MCF 10A (cell line): ENCODE measurements at regions of chr5 and their contacts with region 1.

Region 1: DNA sequence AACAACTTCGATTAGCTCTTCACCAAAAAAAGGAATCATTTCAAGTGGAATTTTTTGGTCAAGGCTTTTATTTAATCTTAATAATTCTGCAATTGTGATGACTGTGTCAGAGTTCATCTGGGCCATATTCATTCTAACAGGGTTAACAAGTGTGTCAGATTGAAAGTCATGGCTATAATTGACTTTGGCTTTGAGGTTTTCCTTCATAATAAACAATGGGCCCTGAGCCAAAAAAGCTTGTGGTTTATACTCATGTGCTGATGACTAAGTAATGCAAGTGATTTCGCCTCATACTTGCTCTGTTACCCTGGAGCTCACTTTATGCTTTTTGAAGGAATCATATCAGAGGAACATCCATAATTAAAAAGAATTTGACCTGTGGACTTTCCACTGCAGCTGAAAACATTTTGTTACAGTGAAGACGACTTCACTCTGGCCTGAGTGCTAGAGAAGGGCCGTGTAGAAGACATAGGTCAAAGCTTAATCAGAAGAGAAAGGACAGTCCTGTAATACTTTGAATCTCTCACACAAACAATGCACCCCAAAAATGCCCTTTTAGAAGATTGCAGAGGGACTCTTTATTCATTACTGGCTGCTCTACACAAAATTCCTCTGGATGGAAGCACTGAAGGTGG is 101.7 kb downstream of the GDNF start:
- DNase-seq: peak; percentile 92
- H3K4me3 Mint-ChIP-seq: peak overlapping the region; percentile 28
- H3K27ac Mint-ChIP-seq: peak overlapping the region; percentile 85
- H3K4me1 Mint-ChIP-seq: peaks cover 29% of the 10 kb centered on the region
- H3K27me3 Mint-ChIP-seq: no peaks in the 10 kb centered on the region
- CTCF ChIP-seq: no peak

Region 2: GRCh38 chr5:37103302-37103701 is 634.9 kb before region 1 on chr5:
- CTCF ChIA-PET with region 1: no interaction called
- POLR2A ChIA-PET with region 1: no interaction called
- intact Hi-C with region 1: no loop called
- DNase-seq: no peak
- H3K4me3 Mint-ChIP-seq: no peak overlapping the region
- H3K27ac Mint-ChIP-seq: no peak overlapping the region
- H3K4me1 Mint-ChIP-seq: no peaks in the 10 kb centered on the region
- H3K27me3 Mint-ChIP-seq: no peaks in the 10 kb centered on the region
- CTCF ChIP-seq: no peak

Region 3: GRCh38 chr5:37658440-37658839 is 79.7 kb before region 1 on chr5:
- CTCF ChIA-PET with region 1: no interaction called
- POLR2A ChIA-PET with region 1: no interaction called
- intact Hi-C with region 1: no loop called
- DNase-seq: peak; percentile 9
- H3K4me3 Mint-ChIP-seq: no peak overlapping the region
- H3K27ac Mint-ChIP-seq: no peak overlapping the region
- H3K4me1 Mint-ChIP-seq: peaks cover 14% of the 10 kb centered on the region
- H3K27me3 Mint-ChIP-seq: no peaks in the 10 kb centered on the region
- CTCF ChIP-seq: no peak

Region 4: GRCh38 chr5:37668524-37669047 is 69.6 kb before region 1 on chr5:
- CTCF ChIA-PET with region 1: no interaction called
- POLR2A ChIA-PET with region 1: interaction called, 4 read pairs
- intact Hi-C with region 1: loop called (anchors 2 kb)
- DNase-seq: peak; percentile 94
- H3K4me3 Mint-ChIP-seq: no peak overlapping the region
- H3K27ac Mint-ChIP-seq: peak overlapping the region; percentile 78
- H3K4me1 Mint-ChIP-seq: peaks cover 13% of the 10 kb centered on the region
- H3K27me3 Mint-ChIP-seq: no peaks in the 10 kb centered on the region
- CTCF ChIP-seq: no peak

Region 5: GRCh38 chr5:37696190-37697021 is 41.8 kb before region 1 on chr5:
- CTCF ChIA-PET with region 1: no interaction called
- POLR2A ChIA-PET with region 1: interaction called, 11 read pairs
- intact Hi-C with region 1: no loop called
- DNase-seq: peak; percentile 74
- H3K4me3 Mint-ChIP-seq: no peak overlapping the region
- H3K27ac Mint-ChIP-seq: peak overlapping the region; percentile 65
- H3K4me1 Mint-ChIP-seq: peaks cover 18% of the 10 kb centered on the region
- H3K27me3 Mint-ChIP-seq: no peaks in the 10 kb centered on the region
- CTCF ChIP-seq: no peak

Region 6: DNA sequence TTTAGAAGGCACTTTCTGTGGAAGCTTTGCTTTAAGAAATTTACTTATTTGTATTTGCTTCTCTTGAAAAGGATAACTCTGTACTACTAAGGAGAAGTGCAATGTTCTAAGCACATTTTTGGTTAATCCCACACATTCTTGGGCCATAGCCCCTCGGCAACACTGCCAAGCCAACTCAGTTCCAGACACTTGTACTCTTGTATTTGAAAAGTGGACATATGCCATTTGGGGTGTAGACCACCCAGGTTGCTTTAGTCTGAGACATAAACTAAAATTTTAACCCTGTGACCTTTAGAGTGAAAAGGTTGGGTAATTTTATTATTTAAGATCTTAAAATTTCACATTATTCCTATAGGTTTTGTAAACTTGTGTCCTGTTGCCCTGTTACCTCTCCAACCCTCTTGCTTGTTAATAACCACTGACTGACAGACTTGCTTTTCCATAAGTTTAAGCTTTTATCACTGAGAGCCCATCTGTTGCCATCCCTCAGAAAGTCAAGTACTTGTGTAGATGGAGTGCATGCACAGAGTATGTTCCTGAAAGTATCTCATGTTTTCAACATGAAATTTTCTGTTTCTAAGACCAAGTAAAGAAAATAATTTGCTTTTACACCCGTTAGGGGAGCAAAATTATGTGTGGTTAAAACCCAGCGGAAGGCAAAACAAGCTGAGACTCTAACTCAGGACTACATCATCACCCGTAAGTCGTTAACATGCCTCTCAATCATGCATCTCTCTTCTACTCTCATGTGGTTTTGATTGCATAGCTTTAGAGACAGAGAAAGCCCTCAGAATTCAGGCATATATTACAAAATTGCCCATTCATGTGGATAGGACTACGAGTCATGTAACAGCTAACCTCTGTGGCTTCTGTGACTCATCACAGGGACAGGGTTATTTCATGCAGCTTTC is 15.7 kb before region 1 on chr5:
- CTCF ChIA-PET with region 1: interaction called, 14 read pairs
- POLR2A ChIA-PET with region 1: interaction called, 9 read pairs
- intact Hi-C with region 1: no loop called
- DNase-seq: peak; percentile 77
- H3K4me3 Mint-ChIP-seq: no peak overlapping the region
- H3K27ac Mint-ChIP-seq: no peak overlapping the region
- H3K4me1 Mint-ChIP-seq: peaks cover 19% of the 10 kb centered on the region
- H3K27me3 Mint-ChIP-seq: no peaks in the 10 kb centered on the region
- CTCF ChIP-seq: no peak

Region 7: GRCh38 chr5:37757980-37758583 is 19.9 kb after region 1 on chr5:
- CTCF ChIA-PET with region 1: no interaction called
- POLR2A ChIA-PET with region 1: no interaction called
- intact Hi-C with region 1: no loop called
- DNase-seq: peak; percentile 7
- H3K4me3 Mint-ChIP-seq: no peak overlapping the region
- H3K27ac Mint-ChIP-seq: no peak overlapping the region
- H3K4me1 Mint-ChIP-seq: no peaks in the 10 kb centered on the region
- H3K27me3 Mint-ChIP-seq: no peaks in the 10 kb centered on the region
- CTCF ChIP-seq: no peak